Activated B cell treated with CpG ODN at 0.5 μM for 24 hours (primary cell): ENCODE measurements at regions of chr12 and their contacts with region 1.

Region 1: GRCh38 chr12:59620326-59620725 is 24.5 kb downstream of the SLC16A7 start:
- DNase-seq: no peak
- ATAC-seq: peak; percentile 82
- H3K4me3 Mint-ChIP-seq: peak overlapping the region; percentile 39
- H3K27ac Mint-ChIP-seq: peak overlapping the region; percentile 62
- H3K4me1 Mint-ChIP-seq: peaks cover 38% of the 10 kb centered on the region
- H3K27me3 Mint-ChIP-seq: no peaks in the 10 kb centered on the region
- CTCF ChIP-seq: no peak

Region 2: GRCh38 chr12:59633986-59634653 is 13.8 kb after region 1 on chr12:
- CTCF ChIA-PET with region 1: no interaction called
- POLR2A ChIA-PET with region 1: no interaction called
- intact Hi-C with region 1: loop called (anchors 2 kb)
- DNase-seq: no peak
- ATAC-seq: no peak
- H3K4me3 Mint-ChIP-seq: no peak overlapping the region
- H3K27ac Mint-ChIP-seq: no peak overlapping the region
- H3K4me1 Mint-ChIP-seq: peaks cover 36% of the 10 kb centered on the region
- H3K27me3 Mint-ChIP-seq: no peaks in the 10 kb centered on the region
- CTCF ChIP-seq: no peak